Activated CD4-positive, alpha-beta memory T cell treated with anti-CD3 and anti-CD28 coated beads for 36 hours (primary cell): ENCODE measurements at regions of chr4 and their contacts with region 1.

Region 1: DNA sequence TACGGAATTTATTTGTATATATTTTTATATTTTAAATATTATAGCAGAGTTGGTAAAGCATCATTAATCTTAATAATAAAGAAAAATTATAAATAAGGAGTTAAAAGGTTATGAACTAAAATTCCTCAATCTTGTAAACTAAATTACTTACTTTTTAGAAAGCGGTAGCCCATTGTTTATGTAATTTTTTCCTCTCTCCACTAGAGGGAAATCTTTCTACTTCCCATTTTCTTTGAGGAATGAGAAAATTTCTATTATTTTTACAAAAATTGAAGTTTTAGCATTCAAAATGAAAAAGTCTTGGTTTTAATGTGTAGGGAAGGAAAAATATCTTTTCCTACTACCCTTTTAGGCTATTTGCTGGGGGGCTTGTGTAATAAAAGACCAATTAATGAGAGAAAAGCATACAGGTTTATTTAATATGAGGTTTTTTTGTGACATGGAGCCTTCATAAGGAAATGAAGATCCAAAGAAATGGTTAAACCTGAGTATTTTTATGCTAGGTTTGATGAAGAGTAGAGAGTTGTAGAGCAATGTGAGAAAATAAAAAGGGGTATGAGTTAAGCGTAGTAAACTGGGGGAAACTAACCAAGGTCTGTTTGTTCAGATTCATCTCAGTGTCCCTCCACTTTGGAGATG is 68.7 kb upstream of the ADAD1 start:
- DNase-seq: no peak
- H3K4me3 Mint-ChIP-seq: no peak overlapping the region
- H3K27ac Mint-ChIP-seq: no peak overlapping the region
- H3K4me1 Mint-ChIP-seq: peaks cover 5% of the 10 kb centered on the region
- H3K27me3 Mint-ChIP-seq: no peaks in the 10 kb centered on the region

Region 2: DNA sequence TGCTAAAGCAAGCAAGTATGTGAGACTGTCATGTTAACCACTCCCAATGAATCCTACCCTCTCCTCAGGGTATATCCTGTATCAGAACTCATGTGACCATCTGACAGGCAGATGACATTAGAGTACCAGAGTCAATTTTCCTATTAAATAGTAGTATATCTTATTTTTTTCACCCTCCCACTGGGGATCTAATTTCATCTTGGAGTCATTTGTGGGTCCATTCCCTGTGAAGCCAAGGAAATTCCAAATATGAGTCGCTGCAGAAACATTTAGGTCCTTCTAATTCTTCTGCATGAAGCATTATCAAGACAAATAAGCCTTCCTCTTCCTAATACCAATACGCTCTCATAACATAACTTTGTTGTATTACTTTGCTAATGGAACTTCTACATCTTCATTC is 210.2 kb before region 1 on chr4:
- CTCF ChIA-PET with region 1: no interaction called
- POLR2A ChIA-PET with region 1: no interaction called
- intact Hi-C with region 1: no loop called
- DNase-seq: no peak
- H3K4me3 Mint-ChIP-seq: no peak overlapping the region
- H3K27ac Mint-ChIP-seq: no peak overlapping the region
- H3K4me1 Mint-ChIP-seq: no peaks in the 10 kb centered on the region
- H3K27me3 Mint-ChIP-seq: peaks cover 2% of the 10 kb centered on the region

Region 3: DNA sequence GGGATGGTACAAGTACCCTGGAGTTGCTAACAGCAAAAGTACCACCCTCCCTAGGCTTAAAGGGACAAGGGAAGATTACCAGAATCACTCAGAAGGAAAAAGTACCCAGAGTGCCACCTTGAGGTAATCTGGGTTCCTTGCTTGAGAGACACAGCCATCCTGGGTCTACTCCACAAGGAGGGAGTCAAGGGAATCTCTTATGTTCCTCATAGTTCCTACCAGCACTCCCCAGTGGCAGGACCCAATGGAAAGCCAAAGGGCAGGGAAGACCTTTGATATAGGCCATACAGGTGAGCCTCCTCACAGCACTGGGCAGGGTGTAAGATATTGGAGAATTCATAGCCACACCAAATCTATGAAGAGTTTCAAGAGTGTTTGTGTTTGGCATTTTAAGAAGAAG is 140.7 kb after region 1 on chr4:
- CTCF ChIA-PET with region 1: no interaction called
- POLR2A ChIA-PET with region 1: no interaction called
- intact Hi-C with region 1: loop called (anchors 2 kb)
- DNase-seq: peak; percentile 34
- H3K4me3 Mint-ChIP-seq: no peak overlapping the region
- H3K27ac Mint-ChIP-seq: peak overlapping the region; percentile 88
- H3K4me1 Mint-ChIP-seq: peaks cover 33% of the 10 kb centered on the region
- H3K27me3 Mint-ChIP-seq: no peaks in the 10 kb centered on the region